Activated B cell treated with CpG ODN at 0.5 μM for 24 hours (primary cell): ENCODE measurements at regions of chr3 and their contacts with region 1.

Region 1: DNA sequence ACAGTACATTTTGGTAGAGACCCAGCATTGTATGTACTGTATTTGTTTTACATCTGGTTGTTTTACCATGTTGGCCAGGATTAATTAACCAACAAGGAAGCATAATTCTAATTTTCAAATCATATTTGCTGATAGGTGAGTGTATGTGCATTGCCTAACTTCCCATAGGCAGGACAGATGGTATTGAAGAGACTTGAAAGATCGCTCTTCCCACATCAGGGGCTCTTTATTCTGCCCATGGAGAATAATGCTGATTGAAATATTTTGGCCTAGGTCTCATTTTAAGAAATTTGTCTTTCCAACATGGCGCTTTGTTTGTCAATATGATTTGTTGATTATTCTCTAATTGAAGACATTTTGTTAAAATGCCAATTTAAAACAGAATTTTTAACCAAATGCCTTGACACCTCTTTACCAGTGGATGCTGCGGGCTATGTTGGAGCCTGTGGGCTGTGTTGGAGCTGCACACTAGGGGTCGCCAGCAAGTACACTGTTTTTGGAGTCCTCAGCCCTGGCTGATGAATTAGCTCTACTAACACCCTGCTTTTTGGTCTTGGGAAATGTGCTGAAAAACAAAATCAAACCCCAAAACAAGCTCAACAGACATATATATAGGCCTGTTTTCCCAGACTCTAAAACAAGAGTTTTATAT is 5.3 kb downstream of the P2RY12 start:
- DNase-seq: no peak
- ATAC-seq: peak; percentile 59
- H3K4me3 Mint-ChIP-seq: no peak overlapping the region
- H3K27ac Mint-ChIP-seq: peak overlapping the region; percentile 66
- H3K4me1 Mint-ChIP-seq: peaks cover 54% of the 10 kb centered on the region
- H3K27me3 Mint-ChIP-seq: no peaks in the 10 kb centered on the region
- CTCF ChIP-seq: no peak

Region 2: DNA sequence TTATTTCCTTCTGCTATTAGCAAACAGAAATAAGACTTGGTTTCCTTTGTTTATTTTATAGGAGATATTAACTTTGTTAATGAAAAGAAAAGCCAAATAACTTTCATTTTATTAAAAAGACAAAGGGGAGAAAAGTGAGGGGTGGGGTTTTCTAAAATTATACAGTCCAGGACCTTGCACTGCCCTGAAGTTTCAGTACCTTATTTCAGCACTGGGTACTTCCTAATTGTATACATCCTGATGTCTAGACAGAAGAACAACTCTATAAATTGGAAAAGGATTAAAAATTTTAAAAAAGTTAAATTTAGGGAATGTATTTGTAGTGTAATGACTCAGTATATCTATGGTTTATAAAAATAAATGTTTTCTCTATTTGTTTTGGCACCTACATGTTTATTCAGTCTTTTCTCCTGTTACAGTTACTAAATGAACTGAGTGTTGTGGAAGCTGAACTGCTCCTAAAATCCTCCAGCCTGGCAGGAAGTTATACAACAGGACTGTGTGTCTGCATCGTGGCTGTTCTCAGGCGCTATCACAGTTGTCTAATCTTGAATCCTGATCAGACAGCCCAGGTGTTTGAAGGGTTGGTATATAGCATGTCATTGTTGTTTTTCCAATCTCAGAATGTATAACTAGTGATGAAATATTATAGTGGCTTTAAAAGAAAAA is 22.3 kb before region 1 on chr3:
- CTCF ChIA-PET with region 1: interaction called, 3 read pairs
- POLR2A ChIA-PET with region 1: interaction called, 4 read pairs
- intact Hi-C with region 1: loop called (anchors 2 kb)
- DNase-seq: no peak
- ATAC-seq: peak; percentile 57
- H3K4me3 Mint-ChIP-seq: no peak overlapping the region
- H3K27ac Mint-ChIP-seq: peak overlapping the region; percentile 13
- H3K4me1 Mint-ChIP-seq: peaks cover 30% of the 10 kb centered on the region
- H3K27me3 Mint-ChIP-seq: no peaks in the 10 kb centered on the region
- CTCF ChIP-seq: no peak

Region 3: DNA sequence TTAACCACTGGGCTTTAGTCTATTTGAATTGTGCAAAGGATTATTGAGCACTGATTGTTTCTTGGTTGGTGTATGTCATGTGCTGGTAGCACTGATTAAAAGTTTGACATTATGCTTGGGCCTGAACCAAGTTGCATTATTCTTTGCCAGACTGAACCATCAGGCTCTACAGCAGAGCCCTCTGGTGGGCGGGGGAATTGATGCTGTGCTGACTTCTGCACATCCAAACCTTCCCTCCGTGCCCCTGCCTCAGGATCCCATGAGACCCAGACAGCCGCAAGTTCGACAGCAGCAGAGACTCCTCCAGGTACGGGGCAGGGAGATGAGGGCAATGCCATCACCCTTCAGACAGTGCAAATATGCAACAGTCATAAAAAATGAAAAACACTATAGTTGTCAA is 33.8 kb after region 1 on chr3:
- CTCF ChIA-PET with region 1: interaction called, 6 read pairs
- POLR2A ChIA-PET with region 1: interaction called, 3 read pairs
- intact Hi-C with region 1: loop called (anchors 1 kb)
- DNase-seq: no peak
- ATAC-seq: no peak
- H3K4me3 Mint-ChIP-seq: no peak overlapping the region
- H3K27ac Mint-ChIP-seq: no peak overlapping the region
- H3K4me1 Mint-ChIP-seq: peaks cover 10% of the 10 kb centered on the region
- H3K27me3 Mint-ChIP-seq: no peaks in the 10 kb centered on the region
- CTCF ChIP-seq: no peak

Region 4: GRCh38 chr3:151468284-151468917 is 89.2 kb after region 1 on chr3:
- CTCF ChIA-PET with region 1: interaction called, 7 read pairs
- POLR2A ChIA-PET with region 1: no interaction called
- intact Hi-C with region 1: loop called (anchors 1 kb)
- DNase-seq: no peak
- ATAC-seq: peak; percentile 56
- H3K4me3 Mint-ChIP-seq: no peak overlapping the region
- H3K27ac Mint-ChIP-seq: no peak overlapping the region
- H3K4me1 Mint-ChIP-seq: peaks cover 6% of the 10 kb centered on the region
- H3K27me3 Mint-ChIP-seq: peaks cover 2% of the 10 kb centered on the region
- CTCF ChIP-seq: no peak

Region 5: DNA sequence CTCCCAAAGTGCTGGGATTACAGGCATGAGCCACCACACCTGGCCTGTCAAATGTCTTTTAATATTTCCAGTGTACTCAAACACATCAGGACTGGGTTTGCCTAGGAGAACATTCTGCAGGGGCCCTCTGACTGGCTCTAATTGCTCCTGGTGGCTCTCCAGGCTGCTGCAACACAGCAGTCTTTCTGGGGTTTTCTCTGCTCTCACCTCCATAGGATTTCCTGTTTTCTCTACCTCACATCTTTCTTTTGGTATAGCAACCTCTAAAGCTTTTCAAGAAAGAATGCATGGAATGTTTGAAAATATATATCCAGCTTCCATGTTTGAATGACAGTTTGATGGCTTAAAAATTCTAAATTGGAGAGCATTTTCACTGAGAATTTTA is 164.9 kb after region 1 on chr3:
- CTCF ChIA-PET with region 1: no interaction called
- POLR2A ChIA-PET with region 1: no interaction called
- intact Hi-C with region 1: no loop called
- DNase-seq: no peak
- ATAC-seq: no peak
- H3K4me3 Mint-ChIP-seq: no peak overlapping the region
- H3K27ac Mint-ChIP-seq: no peak overlapping the region
- H3K4me1 Mint-ChIP-seq: no peaks in the 10 kb centered on the region
- H3K27me3 Mint-ChIP-seq: peaks cover 3% of the 10 kb centered on the region
- CTCF ChIP-seq: no peak

Region 6: DNA sequence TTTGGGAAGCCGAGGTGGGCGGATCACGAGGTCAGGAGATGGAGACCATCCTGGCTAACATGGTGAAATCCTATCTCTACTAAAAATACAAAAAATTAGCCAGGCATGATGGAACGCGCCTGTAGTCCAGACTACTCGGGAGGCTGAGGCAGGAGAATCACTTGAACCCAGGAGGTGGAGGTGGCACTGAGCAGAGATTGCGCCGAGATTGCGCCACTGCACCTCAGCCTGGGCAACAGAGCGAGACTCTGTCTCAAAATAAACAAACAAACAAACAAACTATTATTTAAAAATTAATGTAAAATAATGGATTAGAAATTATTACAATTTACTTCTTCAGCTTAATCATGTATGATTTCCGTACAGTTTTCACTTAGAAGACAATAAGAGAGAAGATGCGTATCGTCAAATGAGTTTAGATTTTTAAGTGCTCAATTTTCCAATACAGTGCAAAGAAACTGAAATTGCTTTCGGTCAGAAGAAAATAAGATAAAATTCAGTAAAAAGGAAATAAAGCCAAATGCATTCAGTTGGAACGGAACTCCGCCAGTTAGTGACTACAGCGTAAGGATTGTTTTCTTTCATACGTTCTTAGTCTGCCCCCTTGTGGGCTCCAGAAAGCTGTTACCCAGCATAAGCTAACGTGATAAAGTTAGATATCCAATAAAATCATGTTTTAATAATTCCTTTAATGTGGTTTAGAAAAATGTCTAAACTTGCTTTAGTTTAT is 459.5 kb after region 1 on chr3:
- CTCF ChIA-PET with region 1: interaction called, 3 read pairs
- POLR2A ChIA-PET with region 1: no interaction called
- intact Hi-C with region 1: loop called (anchors 5 kb)
- DNase-seq: no peak
- ATAC-seq: peak; percentile 68
- H3K4me3 Mint-ChIP-seq: no peak overlapping the region
- H3K27ac Mint-ChIP-seq: no peak overlapping the region
- H3K4me1 Mint-ChIP-seq: no peaks in the 10 kb centered on the region
- H3K27me3 Mint-ChIP-seq: peaks cover 3% of the 10 kb centered on the region
- CTCF ChIP-seq: peak; percentile 55